ENCODE measurements at regions of chr19 and their contacts with region 1.

Region 1: GRCh38 chr19:18940769-18941407 is at the start of gene HOMER3:
- DNase-seq: peak; percentile 85 to 88
- ATAC-seq: peak; percentile 69 to 91 (median 85)
- H3K4me3 ChIP-seq: peak within 1 kb of the TSS; percentile 58 to 96 (median 73)
- H3K27ac ChIP-seq: peak within 1 kb of the TSS in 7 of 10 donors; percentile 8 to 87 (median 72)
- H3K4me1 ChIP-seq: peaks cover 7 to 20% (median 12%) of the 10 kb centered on the region in 9 donors
- H3K27me3 ChIP-seq: no peaks in the 10 kb centered on the region
- CTCF ChIP-seq: peak in 5 of 9 donors; percentile 10 to 49 (median 33)
- total RNA-seq, gene HOMER3: 10.4 to 23.2 (median 13.6) TPM

Region 2: DNA sequence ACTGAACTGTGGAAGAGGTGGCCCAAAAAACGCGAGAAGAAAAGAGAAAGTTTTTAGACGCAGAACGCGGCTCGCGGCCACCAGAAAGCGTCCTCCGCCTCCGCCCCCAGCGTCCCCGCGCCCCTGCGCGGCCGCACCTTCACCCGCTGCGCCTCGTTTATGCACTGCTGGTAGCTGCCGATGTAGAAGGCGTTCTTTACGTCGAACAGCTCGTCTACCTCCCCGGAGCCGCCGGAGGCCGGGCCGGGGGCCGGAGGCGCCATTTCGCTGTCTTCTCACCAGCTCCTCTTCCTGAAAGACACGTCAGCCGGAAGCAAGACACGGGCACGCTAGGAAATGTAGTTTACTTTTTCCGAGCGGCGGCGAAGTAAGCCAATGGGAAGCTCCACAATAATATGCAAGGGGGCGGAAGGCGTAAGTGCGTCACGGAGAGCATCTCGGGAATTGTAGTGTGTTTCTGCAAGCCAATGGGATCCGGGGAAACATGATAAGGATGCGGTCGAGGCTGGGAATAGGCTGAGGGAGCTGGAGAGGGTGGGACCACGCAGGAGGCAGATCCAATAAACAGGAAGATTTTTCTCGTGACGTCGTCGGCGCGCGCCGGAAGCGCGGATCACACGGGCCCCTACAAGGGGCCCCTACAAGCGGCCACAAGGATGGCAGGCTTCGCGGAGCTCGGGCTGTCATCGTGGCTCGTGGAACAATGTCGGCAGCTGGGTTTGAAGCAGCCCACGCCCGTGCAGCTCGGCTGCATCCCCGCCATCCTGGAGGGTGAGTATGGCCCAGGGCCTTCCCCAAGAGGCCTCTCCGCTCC is 21.6 kb before region 1 on chr19 and contains the starts of genes COPE and DDX49:
- intact Hi-C with region 1: loop called in 2 of 10 experiments (anchors 1 kb)
- DNase-seq: peak; percentile 95 to 99
- ATAC-seq: peak; percentile 96 to 99 (median 99)
- H3K4me3 ChIP-seq: peak within 1 kb of the TSS; percentile 65 to 98 (median 88)
- H3K27ac ChIP-seq: peak within 1 kb of the TSS; percentile 76 to 94 (median 90)
- H3K4me1 ChIP-seq: peaks cover 11 to 40% (median 31%) of the 10 kb centered on the region in 9 donors
- H3K27me3 ChIP-seq: no peaks in the 10 kb centered on the region
- CTCF ChIP-seq: peak in 1 of 9 donors; percentile 7
- total RNA-seq, gene COPE: 102 to 157 (median 117) TPM
- total RNA-seq, gene DDX49: 16.2 to 29.8 (median 21.3) TPM

Measured in heart right ventricle (tissue), 16 donors.